Natural killer cell (primary cell): ENCODE measurements at regions of chr7 and their contacts with region 1.

Region 1: GRCh38 chr7:52463341-52463740 is 572.1 kb upstream of the POM121L12 start:
- DNase-seq: no peak
- ATAC-seq: no peak
- H3K4me3 ChIP-seq: no peak overlapping the region
- H3K4me3 Mint-ChIP-seq: no peak overlapping the region
- H3K27ac ChIP-seq: no peak overlapping the region
- H3K27ac Mint-ChIP-seq: no peak overlapping the region
- H3K4me1 ChIP-seq: no peaks in the 10 kb centered on the region
- H3K4me1 Mint-ChIP-seq: no peaks in the 10 kb centered on the region
- H3K27me3 ChIP-seq: no peaks in the 10 kb centered on the region
- H3K27me3 Mint-ChIP-seq: no peaks in the 10 kb centered on the region
- CTCF ChIP-seq: no peak

Region 2: GRCh38 chr7:52450816-52451215 is 12.5 kb before region 1 on chr7:
- intact Hi-C with region 1: no loop called
- DNase-seq: no peak
- ATAC-seq: no peak
- H3K4me3 ChIP-seq: no peak overlapping the region
- H3K4me3 Mint-ChIP-seq: no peak overlapping the region
- H3K27ac ChIP-seq: no peak overlapping the region
- H3K27ac Mint-ChIP-seq: no peak overlapping the region
- H3K4me1 ChIP-seq: no peaks in the 10 kb centered on the region
- H3K4me1 Mint-ChIP-seq: no peaks in the 10 kb centered on the region
- H3K27me3 ChIP-seq: no peaks in the 10 kb centered on the region
- H3K27me3 Mint-ChIP-seq: no peaks in the 10 kb centered on the region
- CTCF ChIP-seq: no peak

Region 3: GRCh38 chr7:52479990-52480389 is 16.6 kb after region 1 on chr7:
- intact Hi-C with region 1: loop called (anchors 1 kb)
- DNase-seq: no peak
- ATAC-seq: no peak
- H3K4me3 ChIP-seq: no peak overlapping the region
- H3K4me3 Mint-ChIP-seq: no peak overlapping the region
- H3K27ac ChIP-seq: no peak overlapping the region
- H3K27ac Mint-ChIP-seq: no peak overlapping the region
- H3K4me1 ChIP-seq: no peaks in the 10 kb centered on the region
- H3K4me1 Mint-ChIP-seq: no peaks in the 10 kb centered on the region
- H3K27me3 ChIP-seq: no peaks in the 10 kb centered on the region
- H3K27me3 Mint-ChIP-seq: no peaks in the 10 kb centered on the region
- CTCF ChIP-seq: no peak